ENCODE measurements at regions of chrX and their contacts with region 1.

Region 1: DNA sequence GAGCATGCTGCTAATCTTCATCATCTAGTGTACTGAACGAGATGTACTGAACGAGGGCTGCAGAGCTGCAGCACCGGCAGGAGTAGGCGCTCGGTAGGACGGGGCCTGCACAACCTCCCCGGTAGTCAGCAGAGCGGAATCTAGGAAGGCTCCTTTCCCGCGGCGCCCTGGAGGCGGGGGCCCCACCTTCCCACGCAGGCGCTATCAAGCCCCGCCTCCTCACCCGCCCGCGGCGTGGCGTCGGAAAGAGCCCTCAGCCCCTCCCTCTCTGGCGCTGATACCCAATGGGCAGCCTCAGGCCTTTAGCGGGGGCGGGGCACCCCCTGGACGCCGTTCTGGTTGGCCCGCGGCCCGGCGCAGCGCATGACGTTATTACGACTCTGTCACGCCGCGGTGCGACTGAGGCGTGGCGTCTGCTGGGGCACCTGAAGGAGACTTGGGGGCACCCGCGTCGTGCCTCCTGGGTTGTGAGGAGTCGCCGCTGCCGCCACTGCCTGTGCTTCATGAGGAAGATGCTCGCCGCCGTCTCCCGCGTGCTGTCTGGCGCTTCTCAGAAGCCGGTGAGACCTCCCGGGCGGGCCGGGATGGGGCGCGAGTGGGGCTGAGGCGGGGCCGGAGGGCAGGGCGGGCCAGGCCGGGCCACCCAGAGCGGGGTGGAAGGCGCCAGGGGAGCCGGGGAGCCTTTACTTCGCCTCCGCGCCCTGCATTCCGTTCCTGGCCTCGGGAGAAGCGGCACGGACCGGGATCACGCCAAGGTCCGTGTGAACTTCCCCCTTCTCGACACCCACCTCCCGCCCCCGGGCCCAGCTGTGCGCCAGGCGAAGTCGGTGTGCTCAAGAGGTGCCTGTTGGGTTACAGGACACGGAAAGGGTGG is at the start of gene PDHA1:
- DNase-seq: peak; percentile 93 to 95 (median 94)
- ATAC-seq: peak; percentile 98 to 99 (median 99)
- H3K4me3 ChIP-seq: peak within 1 kb of the TSS; percentile 58 to 68 (median 68)
- H3K27ac ChIP-seq: peak within 1 kb of the TSS; percentile 71 to 78 (median 73)
- H3K4me1 ChIP-seq: peaks cover 0 to 6% (median 0%) of the 10 kb centered on the region in 4 donors
- H3K27me3 ChIP-seq: no peaks in the 10 kb centered on the region
- CTCF ChIP-seq: no peak
- POLR2A ChIP-seq: peak; percentile 61
- total RNA-seq, gene PDHA1: 78.5 to 133 (median 120) TPM

Region 2: GRCh38 chrX:18390941-18391538 is 952.7 kb before region 1 on chrX:
- intact Hi-C with region 1: loop called (anchors 10 kb)
- DNase-seq: peak in 2 of 3 donors; percentile 50 to 66
- ATAC-seq: peak; percentile 60 to 73 (median 64)
- H3K4me3 ChIP-seq: no peak overlapping the region
- H3K27ac ChIP-seq: no peak overlapping the region
- H3K4me1 ChIP-seq: peaks cover 0 to 6% (median 0%) of the 10 kb centered on the region in 4 donors
- H3K27me3 ChIP-seq: no peaks in the 10 kb centered on the region
- CTCF ChIP-seq: peak; percentile 76 to 88 (median 78)
- POLR2A ChIP-seq: no peak

Measured in right lobe of liver (tissue), 6 donors.